ENCODE measurements at regions of chr9 and their contacts with region 1.

Region 1: GRCh38 chr9:34591248-34591916 is 1.9 kb upstream of the CNTFR start:
- DNase-seq: peak; percentile 85 to 92 (median 86)
- ATAC-seq: peak; percentile 68 to 91 (median 85)
- H3K4me3 ChIP-seq: peak overlapping the region in 10 of 12 donors; percentile 13 to 63 (median 52)
- H3K27ac ChIP-seq: peak overlapping the region in 4 of 12 donors; percentile 4 to 50 (median 24)
- H3K4me1 ChIP-seq: peaks cover 0 to 52% (median 30%) of the 10 kb centered on the region in 12 donors
- H3K27me3 ChIP-seq: peaks cover 4 to 77% (median 13%) of the 10 kb centered on the region in 9 donors
- CTCF ChIP-seq: peak; percentile 82 to 98 (median 94)
- POLR2A ChIP-seq: no peak

Region 2: DNA sequence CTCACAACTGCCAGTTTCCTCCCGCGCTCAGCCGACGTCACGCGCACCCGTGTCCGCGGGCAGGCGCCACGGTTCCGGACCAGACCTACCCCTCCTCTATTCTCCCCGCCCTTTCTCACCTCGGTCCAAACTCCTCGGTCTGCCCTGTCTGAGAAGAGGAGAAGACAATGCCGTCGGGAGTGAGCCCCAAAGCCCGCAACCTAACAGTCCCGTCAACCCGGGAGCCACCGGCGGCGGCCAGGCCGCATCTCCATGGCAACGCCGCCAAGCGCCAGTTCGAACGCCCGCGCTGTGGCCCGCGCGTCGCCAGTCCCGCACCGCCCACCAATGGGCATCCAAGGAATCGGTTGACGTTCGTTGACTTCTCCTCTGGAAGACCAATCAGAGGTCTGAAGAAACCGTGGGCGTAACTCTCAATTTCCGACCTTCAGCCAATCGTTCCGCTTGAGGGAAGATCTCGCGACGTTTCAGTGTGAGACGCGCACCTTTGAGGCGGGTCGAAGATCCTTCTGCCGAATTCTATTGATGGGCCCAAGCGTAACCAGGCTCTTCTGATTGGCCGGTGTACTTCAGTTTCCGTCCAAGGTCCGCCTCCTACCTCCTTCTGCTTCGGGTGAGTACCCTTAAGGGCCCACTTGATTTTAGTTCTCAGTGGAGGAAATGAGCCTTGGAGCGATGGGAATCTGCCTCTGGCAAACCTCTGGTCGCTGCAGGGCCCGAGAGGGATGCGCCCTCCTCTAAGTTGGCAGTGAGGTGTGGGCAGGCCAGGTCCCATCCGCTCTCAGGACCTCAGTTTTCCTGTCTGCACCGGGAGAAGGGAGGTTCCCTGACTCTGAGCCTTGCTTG is 262.2 kb before region 1 on chr9 and contains the starts of genes KIF24 and NUDT2:
- intact Hi-C with region 1: loop called in 5 of 10 experiments (anchors 5 to 10 kb)
- DNase-seq: peak; percentile 96 to 99 (median 98)
- ATAC-seq: peak; percentile 97 to 98 (median 98)
- H3K4me3 ChIP-seq: peak within 1 kb of the TSS; percentile 47 to 88 (median 80)
- H3K27ac ChIP-seq: peak within 1 kb of the TSS; percentile 88 to 96 (median 91)
- H3K4me1 ChIP-seq: peaks cover 0 to 35% (median 14%) of the 10 kb centered on the region in 12 donors
- H3K27me3 ChIP-seq: no peaks in the 10 kb centered on the region
- CTCF ChIP-seq: peak in 4 of 12 donors; percentile 7 to 33 (median 10)
- POLR2A ChIP-seq: peak in 1 of 2 donors; percentile 88
- total RNA-seq, gene KIF24: 0.25 to 1.6 (median 0.67) TPM
- total RNA-seq, gene NUDT2: 14.1 to 21.3 (median 17.2) TPM

Region 3: DNA sequence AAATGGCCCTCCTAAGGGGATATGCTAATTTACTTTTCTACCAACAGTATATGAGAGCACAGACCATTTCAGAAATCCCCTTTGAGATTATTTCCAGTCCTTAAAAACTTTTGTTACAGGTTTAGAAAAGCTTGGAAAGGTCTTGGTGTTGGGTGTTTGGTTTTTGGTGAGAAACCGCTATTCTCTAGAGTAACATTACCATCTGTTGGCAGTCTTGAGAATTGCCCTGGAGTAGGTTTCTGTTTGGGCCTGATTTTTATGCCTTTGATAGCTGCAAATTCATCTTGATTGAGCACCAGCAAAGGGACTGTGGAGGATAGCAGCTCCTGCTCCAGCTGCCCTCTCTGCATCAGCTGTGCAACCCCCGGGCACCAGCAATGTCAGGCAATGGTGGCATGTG is 254.0 kb before region 1 on chr9:
- intact Hi-C with region 1: loop called in 6 of 10 experiments (anchors 5 to 10 kb)
- DNase-seq: no peak
- ATAC-seq: no peak
- H3K4me3 ChIP-seq: no peak overlapping the region
- H3K27ac ChIP-seq: no peak overlapping the region
- H3K4me1 ChIP-seq: peaks cover 0 to 30% (median 12%) of the 10 kb centered on the region in 12 donors
- H3K27me3 ChIP-seq: no peaks in the 10 kb centered on the region
- CTCF ChIP-seq: no peak
- POLR2A ChIP-seq: no peak

Region 4: DNA sequence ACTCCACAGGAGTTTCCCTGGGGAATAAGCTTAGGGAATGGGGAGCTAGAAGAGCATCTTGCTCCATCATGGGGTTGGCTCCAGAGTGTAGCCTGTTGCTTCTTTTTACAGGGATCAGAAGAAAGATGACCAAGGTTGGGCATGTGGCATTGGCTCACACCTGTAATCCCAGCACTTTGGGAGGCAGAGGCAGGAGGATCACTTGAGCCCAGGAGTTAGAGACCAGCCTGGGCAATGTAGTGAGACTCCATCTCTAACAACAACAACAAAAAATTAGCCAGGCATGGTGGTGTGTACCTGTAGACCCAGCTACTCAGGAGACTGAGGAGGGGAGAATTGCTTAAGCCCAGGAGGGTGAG is 243.6 kb before region 1 on chr9:
- intact Hi-C with region 1: no loop called
- DNase-seq: no peak
- ATAC-seq: no peak
- H3K4me3 ChIP-seq: no peak overlapping the region
- H3K27ac ChIP-seq: no peak overlapping the region
- H3K4me1 ChIP-seq: peaks cover 0 to 28% (median 15%) of the 10 kb centered on the region in 12 donors
- H3K27me3 ChIP-seq: no peaks in the 10 kb centered on the region
- CTCF ChIP-seq: no peak
- POLR2A ChIP-seq: no peak

Region 5: DNA sequence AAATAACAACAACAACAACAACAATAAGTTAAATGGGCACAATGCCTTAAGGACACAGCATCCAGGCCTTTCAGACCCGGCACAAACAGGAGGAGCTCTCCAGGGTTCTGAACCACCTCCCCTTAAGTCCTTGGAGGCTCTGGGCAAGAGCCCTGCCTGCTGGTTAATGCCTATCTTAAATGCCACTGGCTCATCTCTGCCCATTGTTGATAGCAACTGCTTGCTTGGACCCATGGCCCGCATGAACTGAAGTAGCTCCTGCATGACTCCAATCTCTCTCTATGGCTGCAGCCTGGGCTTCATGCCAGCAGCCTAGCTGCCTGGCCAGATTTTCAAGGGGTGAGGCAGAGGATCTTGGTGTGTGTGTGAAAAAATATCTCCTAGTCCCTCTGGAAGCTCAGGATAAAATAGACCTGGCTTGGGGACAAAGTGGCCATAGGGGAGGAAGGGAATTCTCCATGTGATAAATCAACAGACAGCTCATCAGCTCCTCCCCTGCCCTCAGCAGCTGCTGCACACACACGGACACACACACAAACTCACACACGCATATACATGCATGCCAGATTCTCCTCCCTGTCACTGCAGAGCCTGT is 160.4 kb before region 1 on chr9:
- intact Hi-C with region 1: loop called in 9 of 10 experiments (anchors 5 to 10 kb)
- DNase-seq: peak; percentile 80 to 90 (median 84)
- ATAC-seq: peak; percentile 96 to 98 (median 98)
- H3K4me3 ChIP-seq: no peak overlapping the region
- H3K27ac ChIP-seq: peak overlapping the region in 1 of 12 donors; percentile 39
- H3K4me1 ChIP-seq: peaks cover 6 to 38% (median 19%) of the 10 kb centered on the region in 12 donors
- H3K27me3 ChIP-seq: no peaks in the 10 kb centered on the region
- CTCF ChIP-seq: no peak
- POLR2A ChIP-seq: no peak

Region 6: DNA sequence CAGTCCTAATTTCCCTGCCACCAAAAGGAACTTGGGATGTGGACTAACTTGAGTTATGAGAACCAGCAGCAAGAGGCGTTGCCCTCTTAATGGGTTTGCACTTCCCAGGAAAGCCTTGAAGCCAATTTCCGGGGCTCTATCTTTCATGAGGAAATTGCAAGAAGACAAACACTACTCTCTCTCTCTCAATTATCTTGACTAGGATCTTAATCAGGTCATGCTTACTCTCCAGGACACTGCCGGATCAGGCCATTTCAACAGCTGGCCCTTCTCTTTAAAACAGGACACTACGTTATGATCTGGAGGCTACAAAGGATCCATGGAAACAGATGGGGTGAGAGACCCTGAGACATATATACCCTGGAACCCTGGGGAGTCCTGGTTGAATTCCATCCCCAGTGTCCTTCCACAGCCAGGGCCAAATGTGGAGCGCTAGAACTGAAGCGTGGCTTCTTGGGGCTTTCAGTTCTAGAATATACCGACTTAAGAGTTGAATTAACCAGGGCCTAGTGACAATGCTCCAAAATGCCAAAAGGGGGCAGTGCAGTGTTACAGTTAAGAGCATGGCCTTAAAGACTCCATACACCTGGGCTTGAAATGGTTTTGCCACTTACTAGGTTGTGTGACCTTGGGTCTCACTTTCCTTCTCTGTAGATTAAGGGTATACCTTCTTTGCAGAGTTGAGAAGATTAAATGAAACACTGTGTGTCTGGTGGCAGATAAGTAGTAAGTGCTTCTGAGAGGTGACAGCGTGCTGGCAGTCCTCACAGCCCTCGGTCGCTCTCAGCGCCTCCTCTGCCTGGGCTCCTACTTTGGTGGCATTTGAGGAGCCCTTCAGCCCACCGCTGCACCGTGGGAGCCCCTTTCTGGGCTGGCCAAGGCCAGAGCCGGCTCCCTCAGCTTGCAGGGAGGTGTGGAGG is 154.1 kb before region 1 on chr9:
- intact Hi-C with region 1: loop called in 9 of 10 experiments (anchors 5 to 10 kb)
- DNase-seq: peak in 4 of 5 donors; percentile 38 to 48 (median 42)
- ATAC-seq: peak; percentile 68 to 89 (median 84)
- H3K4me3 ChIP-seq: no peak overlapping the region
- H3K27ac ChIP-seq: no peak overlapping the region
- H3K4me1 ChIP-seq: peaks cover 3 to 42% (median 28%) of the 10 kb centered on the region in 12 donors
- H3K27me3 ChIP-seq: no peaks in the 10 kb centered on the region
- CTCF ChIP-seq: peak; percentile 66 to 85 (median 79)
- POLR2A ChIP-seq: no peak

Region 7: DNA sequence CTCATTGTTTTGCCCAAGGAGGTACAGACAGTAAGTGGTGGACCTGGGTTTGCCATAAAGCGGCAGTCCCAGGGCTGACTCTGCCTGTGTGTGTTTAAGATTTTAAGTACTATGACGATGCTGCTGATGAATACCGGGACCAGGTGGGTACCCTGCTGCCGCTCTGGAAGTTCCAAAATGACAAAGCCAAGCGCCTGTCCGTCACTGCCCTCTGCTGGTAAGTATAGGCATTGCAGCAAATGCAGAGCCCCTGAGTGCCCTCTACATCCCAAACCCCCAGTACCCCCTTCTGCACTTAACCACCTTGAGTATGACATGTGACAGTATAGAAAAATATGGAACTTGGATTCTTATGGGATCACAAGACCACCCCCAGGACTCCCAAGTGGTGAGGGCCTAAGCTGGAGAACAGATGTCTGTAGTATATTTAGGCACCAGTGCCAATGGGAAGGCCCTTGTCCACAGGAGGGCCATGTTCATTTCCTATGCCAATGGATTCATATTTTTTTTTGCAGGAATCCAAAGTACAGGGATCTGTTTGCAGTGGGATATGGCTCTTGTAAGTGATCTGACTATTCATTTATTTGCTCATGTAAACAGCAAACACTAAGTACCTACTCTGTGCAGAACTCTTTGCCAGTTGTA is 90.6 kb before region 1 on chr9:
- intact Hi-C with region 1: loop called in 4 of 10 experiments (anchors 5 to 10 kb)
- DNase-seq: peak in 4 of 5 donors; percentile 42 to 48 (median 46)
- ATAC-seq: peak; percentile 30 to 71 (median 54)
- H3K4me3 ChIP-seq: no peak overlapping the region
- H3K27ac ChIP-seq: no peak overlapping the region
- H3K4me1 ChIP-seq: peaks cover 0 to 26% (median 15%) of the 10 kb centered on the region in 12 donors
- H3K27me3 ChIP-seq: peaks cover 0 to 5% (median 0%) of the 10 kb centered on the region in 9 donors
- CTCF ChIP-seq: peak; percentile 94 to 99 (median 98)
- POLR2A ChIP-seq: no peak

Region 8: DNA sequence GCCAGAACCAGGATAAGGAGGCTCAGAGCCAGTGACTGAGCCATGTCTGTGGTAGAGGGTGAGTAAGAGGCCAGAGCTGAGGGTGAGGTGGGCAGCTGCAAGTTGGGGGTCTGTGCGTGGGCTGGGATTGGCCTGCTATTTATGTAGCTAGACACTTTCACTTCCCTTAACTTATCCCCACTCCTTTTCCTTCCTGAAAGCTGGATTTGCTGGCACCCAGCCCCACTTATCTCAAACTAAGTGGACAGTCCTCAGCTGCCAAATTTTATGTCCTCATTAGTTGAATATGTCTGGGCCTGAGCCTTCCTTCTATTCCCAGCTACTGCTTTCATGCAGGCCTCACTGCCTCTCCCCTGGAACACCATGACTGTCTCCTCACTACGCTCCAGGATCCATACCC is 118.6 kb after region 1 on chr9 and contains the start of gene CCL21:
- intact Hi-C with region 1: no loop called
- DNase-seq: peak in 4 of 5 donors; percentile 78 to 87 (median 80)
- ATAC-seq: peak; percentile 86 to 95 (median 94)
- H3K4me3 ChIP-seq: no peak within 1 kb of the TSS
- H3K27ac ChIP-seq: peak within 1 kb of the TSS in 11 of 12 donors; percentile 34 to 86 (median 71)
- H3K4me1 ChIP-seq: peaks cover 0 to 21% (median 12%) of the 10 kb centered on the region in 12 donors
- H3K27me3 ChIP-seq: no peaks in the 10 kb centered on the region
- CTCF ChIP-seq: no peak
- POLR2A ChIP-seq: no peak
- total RNA-seq, gene CCL21: 1.3 to 156 (median 16.6) TPM